ENCODE measurements at regions of chr2 and their contacts with region 1.

Region 1: DNA sequence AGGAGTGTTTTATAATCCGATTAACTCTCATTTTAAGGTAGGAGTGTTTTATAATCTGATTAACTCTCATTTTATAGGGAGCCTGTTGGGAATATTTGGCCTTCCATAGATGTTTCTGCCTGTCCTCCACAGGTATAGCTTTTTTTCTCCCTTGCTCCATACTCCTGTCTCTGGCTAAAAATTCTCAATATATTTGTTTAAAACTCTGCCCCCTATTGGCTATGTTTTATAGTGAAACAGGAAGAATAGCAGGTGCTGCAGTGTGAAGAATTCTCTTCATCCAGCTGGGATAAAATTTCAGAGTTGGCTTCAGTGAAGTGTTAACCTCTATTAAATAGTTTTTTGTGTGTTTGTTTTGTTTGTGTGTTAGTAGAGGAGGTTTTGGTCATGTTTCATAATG is 1046.0 kb upstream of the TMEFF2 start:
- DNase-seq: no peak
- H3K4me3 ChIP-seq: no peak overlapping the region
- H3K27ac ChIP-seq: no peak overlapping the region
- H3K4me1 ChIP-seq: no peaks in the 10 kb centered on the region
- H3K27me3 ChIP-seq: no peaks in the 10 kb centered on the region
- CTCF ChIP-seq: peak; percentile 26 to 56

Region 2: DNA sequence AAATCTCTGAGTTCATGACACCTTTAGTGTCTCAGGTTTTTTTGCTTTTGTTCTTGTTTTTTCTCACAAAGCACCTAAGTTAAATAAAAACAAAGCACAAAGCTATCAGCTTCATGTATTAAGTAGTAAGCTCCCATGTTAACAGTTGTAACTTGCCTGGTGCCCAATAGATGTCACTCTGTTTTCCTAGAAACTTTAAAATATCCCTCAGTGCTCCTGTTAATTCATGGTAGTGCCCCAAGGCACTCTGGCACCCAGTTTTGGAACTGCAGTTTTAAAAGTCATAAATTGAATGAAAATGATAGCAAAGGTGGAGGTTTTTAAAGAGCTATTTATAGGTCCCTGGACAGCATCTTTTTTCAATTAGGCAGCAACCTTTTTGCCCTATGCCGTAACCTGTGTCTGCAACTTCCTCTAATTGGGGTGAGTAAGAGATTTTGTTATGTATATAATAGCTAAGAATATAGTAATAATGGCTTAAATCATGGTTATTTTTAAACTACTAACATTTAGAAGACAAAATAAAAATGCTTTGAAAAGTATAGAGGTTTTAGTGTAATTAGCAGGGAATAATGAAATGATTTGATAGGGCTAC is 491.0 kb before region 1 on chr2:
- CTCF ChIA-PET with region 1: no interaction called
- dilution Hi-C with region 1: no loop called
- in situ Hi-C with region 1: no loop called
- intact Hi-C with region 1: loop called (anchors 1 kb)
- DNase-seq: peak; percentile 2
- H3K4me3 ChIP-seq: no peak overlapping the region
- H3K27ac ChIP-seq: no peak overlapping the region
- H3K4me1 ChIP-seq: no peaks in the 10 kb centered on the region
- H3K27me3 ChIP-seq: no peaks in the 10 kb centered on the region
- CTCF ChIP-seq: peak in 1 of 2 donors; percentile 42

Region 3: DNA sequence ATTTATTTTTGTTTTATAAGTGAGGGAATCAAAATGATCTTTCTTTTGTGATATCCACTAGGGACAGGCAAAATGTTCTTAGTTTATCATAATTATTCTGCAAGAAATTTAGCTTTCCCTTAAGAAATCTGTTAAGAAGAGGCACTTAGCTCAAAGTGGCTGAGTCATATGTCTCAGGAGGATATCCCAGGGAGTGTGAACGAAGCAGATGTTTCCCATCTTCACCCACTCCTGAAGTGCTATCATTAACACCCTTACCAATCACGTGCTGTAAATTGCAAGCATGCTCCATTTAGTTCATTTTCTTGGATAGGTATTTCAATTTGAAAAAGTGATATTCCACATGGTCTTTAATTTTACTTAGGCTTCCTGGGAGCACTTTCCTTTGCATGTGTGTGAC is 271.7 kb before region 1 on chr2:
- CTCF ChIA-PET with region 1: no interaction called
- dilution Hi-C with region 1: no loop called
- in situ Hi-C with region 1: no loop called
- intact Hi-C with region 1: no loop called
- DNase-seq: no peak
- H3K4me3 ChIP-seq: no peak overlapping the region
- H3K27ac ChIP-seq: no peak overlapping the region
- H3K4me1 ChIP-seq: no peaks in the 10 kb centered on the region
- H3K27me3 ChIP-seq: no peaks in the 10 kb centered on the region
- CTCF ChIP-seq: no peak

Region 4: GRCh38 chr2:193111529-193111928 is 129.2 kb before region 1 on chr2:
- CTCF ChIA-PET with region 1: no interaction called
- dilution Hi-C with region 1: no loop called
- in situ Hi-C with region 1: no loop called
- intact Hi-C with region 1: loop called (anchors 2 kb)
- DNase-seq: no peak
- H3K4me3 ChIP-seq: no peak overlapping the region
- H3K27ac ChIP-seq: no peak overlapping the region
- H3K4me1 ChIP-seq: no peaks in the 10 kb centered on the region
- H3K27me3 ChIP-seq: no peaks in the 10 kb centered on the region
- CTCF ChIP-seq: no peak

Measured in mammary epithelial cell (primary cell).